Activated CD4-positive, alpha-beta T cell treated with anti-CD3 and anti-CD28 coated beads, Interleukin-2, amount 10 ng/mL, durations not matched to agents 7 days and 5 days (primary cell): ENCODE measurements at regions of chr6 and their contacts with region 1.

Region 1: DNA sequence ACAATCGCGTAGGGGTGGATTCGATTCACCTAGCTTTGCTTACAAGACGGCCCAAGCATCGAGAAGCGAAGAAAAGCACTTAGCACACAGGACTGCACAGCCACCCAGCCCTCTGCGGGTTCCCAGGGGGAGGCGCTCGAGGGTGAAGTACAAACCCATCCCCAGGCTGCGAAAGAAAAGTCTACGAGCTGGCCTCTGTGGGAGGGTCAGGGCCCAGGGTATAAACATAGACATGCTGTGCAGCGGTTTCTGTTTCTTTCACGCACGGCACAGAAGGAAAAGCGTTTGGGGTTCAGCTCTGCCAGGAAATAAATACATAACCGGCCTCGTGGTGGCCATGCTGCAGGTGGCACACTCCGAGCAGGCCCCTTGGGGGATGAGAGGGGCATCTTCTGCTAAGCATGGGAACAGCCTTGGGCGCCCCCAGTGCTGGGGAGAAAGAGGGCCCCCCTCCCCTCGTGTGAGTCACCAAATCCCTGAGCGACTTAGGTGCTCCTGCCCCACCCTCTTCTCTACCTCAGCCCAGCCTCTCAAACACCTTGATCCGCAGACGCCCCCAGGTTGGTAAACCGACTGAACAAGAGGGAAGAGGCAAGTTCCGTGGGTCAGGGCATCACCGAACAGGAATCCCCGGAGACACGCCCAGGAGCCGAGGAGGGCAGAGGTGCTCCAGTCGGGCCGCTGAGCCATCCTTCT is 91.6 kb upstream of the RIPOR2 start:
- DNase-seq: peak; percentile 85
- H3K4me3 Mint-ChIP-seq: peak overlapping the region; percentile 60
- H3K27ac Mint-ChIP-seq: peak overlapping the region; percentile 87
- H3K4me1 Mint-ChIP-seq: peaks cover 56% of the 10 kb centered on the region
- H3K27me3 Mint-ChIP-seq: no peaks in the 10 kb centered on the region

Region 2: GRCh38 chr6:24919004-24919892 is 108.1 kb before region 1 on chr6:
- CTCF ChIA-PET with region 1: no interaction called
- POLR2A ChIA-PET with region 1: no interaction called
- DNase-seq: peak; percentile 39
- H3K4me3 Mint-ChIP-seq: peak overlapping the region; percentile 67
- H3K27ac Mint-ChIP-seq: peak overlapping the region; percentile 83
- H3K4me1 Mint-ChIP-seq: peaks cover 87% of the 10 kb centered on the region
- H3K27me3 Mint-ChIP-seq: no peaks in the 10 kb centered on the region

Region 3: DNA sequence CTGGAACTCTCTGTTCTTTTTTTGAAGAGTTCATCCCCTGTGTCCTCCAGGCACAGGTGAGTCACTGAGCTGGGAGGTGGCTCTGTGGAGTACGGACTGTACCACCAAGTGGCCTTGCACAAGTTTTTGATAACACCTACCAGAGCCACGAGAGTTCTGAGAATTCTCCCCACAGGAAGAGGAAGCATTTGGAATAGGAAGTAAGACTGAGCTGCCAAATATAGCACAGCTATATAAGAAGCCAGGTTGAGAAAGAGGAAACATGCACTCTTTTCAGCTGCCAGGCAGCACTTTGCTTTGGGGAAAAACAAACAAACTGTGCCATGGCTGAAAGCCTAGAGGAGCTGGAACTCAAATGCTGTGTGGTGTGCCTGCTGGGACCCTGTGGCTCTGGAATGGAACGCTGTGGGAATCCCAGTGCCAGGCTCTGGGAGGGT is 20.8 kb before region 1 on chr6:
- CTCF ChIA-PET with region 1: interaction called, 10 read pairs
- POLR2A ChIA-PET with region 1: interaction called, 3 read pairs
- DNase-seq: peak; percentile 66
- H3K4me3 Mint-ChIP-seq: peak overlapping the region; percentile 2
- H3K27ac Mint-ChIP-seq: peak overlapping the region; percentile 94
- H3K4me1 Mint-ChIP-seq: peaks cover 82% of the 10 kb centered on the region
- H3K27me3 Mint-ChIP-seq: no peaks in the 10 kb centered on the region

Region 4: GRCh38 chr6:25053875-25054371 is 26.6 kb after region 1 on chr6:
- CTCF ChIA-PET with region 1: interaction called, 57 read pairs
- POLR2A ChIA-PET with region 1: no interaction called
- DNase-seq: no peak
- H3K4me3 Mint-ChIP-seq: no peak overlapping the region
- H3K27ac Mint-ChIP-seq: peak overlapping the region; percentile 73
- H3K4me1 Mint-ChIP-seq: peaks cover 76% of the 10 kb centered on the region
- H3K27me3 Mint-ChIP-seq: no peaks in the 10 kb centered on the region

Region 5: DNA sequence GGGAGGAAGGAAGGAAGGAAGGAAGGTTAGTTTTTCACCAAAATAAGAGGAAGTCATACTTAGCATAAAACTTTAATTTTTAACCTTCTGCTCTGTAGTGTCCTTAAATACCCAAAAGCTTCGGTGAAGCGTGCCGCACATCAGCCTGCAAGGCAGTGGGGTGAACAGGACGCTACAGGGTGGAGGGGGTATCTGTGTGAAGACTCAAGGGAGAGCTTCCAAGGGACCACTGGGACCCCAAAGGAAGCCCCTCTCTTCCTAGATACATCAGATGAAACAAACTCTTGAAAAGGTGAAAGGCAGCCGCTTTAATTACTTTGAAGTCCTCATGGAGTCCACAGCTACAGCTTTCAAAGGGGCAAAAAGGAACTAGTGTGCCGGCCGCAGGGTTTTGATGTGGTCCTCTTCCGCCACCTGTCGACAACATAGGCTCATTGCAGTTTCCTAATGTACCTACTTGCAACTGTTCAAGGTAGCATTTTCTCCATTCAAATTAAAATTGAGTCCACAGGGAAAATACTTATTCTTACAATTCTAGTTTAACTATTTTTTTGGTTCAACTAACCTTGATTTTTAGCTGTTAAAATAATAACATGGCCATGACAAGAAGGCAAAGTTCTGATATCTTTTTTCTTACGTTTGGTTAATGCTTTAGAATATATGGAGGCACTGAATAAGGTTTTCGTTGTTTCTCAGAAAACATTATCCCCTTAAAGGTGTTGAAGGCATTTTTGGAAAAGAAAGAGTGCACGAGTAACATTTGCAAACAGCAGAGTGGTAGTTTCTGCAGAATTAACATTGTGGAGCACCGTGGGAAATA is 43.4 kb after region 1 on chr6:
- CTCF ChIA-PET with region 1: interaction called, 45 read pairs
- POLR2A ChIA-PET with region 1: interaction called, 3 read pairs
- DNase-seq: peak; percentile 85
- H3K4me3 Mint-ChIP-seq: no peak overlapping the region
- H3K27ac Mint-ChIP-seq: peak overlapping the region; percentile 86
- H3K4me1 Mint-ChIP-seq: peaks cover 4% of the 10 kb centered on the region
- H3K27me3 Mint-ChIP-seq: peaks cover 3% of the 10 kb centered on the region